Sigmoid colon (tissue), 7 donors: ENCODE measurements at regions of chr11 and their contacts with region 1.

Region 1: DNA sequence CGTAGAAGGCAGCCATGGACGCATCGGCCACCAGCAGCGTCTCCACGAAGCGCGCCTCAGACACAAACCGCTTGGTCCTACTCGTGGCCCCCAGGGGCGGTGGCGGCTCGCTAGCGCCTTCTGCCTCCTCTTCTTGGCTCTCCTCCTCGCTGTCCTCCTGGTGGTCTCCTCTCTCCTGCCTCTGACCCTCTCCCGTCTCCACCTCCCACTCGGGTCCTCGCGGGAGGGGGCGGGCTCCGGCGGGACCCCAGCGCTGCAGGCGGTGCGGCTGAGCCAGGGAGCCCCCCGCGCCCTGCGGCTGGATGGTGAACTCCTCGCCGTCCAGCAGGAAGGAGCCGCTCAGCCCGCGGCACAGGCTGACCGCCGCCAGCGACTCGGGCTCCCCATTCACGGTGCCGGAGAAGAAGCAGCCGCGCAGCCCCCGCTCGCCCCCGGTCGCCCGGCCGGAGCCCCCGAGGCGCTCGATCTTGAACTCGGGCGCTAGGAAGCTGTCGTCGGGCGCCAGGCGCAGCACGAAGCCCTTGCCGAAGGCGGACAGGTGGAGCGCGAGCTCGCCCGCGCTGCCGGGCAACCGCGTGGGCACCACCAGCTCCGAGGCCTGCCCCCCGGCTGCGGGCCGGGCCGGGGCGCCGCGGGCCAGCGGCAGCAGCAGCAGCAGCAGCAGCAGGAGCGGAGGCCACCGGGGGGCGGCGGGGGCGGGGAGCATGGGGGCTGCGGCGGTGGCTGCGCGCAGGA is 661 bp downstream of the ADAMTS8 start:
- DNase-seq: peak; percentile 84
- H3K4me3 ChIP-seq: peak overlapping the region; percentile 43 to 74 (median 60)
- H3K27ac ChIP-seq: peak overlapping the region; percentile 50 to 77 (median 59)
- H3K4me1 ChIP-seq: peaks cover 0 to 38% (median 30%) of the 10 kb centered on the region in 4 donors
- H3K27me3 ChIP-seq: peaks cover 0 to 11% (median 0%) of the 10 kb centered on the region in 3 donors
- CTCF ChIP-seq: peak; percentile 27 to 51 (median 50)
- EP300 ChIP-seq: no peak
- POLR2A ChIP-seq: no peak

Region 2: DNA sequence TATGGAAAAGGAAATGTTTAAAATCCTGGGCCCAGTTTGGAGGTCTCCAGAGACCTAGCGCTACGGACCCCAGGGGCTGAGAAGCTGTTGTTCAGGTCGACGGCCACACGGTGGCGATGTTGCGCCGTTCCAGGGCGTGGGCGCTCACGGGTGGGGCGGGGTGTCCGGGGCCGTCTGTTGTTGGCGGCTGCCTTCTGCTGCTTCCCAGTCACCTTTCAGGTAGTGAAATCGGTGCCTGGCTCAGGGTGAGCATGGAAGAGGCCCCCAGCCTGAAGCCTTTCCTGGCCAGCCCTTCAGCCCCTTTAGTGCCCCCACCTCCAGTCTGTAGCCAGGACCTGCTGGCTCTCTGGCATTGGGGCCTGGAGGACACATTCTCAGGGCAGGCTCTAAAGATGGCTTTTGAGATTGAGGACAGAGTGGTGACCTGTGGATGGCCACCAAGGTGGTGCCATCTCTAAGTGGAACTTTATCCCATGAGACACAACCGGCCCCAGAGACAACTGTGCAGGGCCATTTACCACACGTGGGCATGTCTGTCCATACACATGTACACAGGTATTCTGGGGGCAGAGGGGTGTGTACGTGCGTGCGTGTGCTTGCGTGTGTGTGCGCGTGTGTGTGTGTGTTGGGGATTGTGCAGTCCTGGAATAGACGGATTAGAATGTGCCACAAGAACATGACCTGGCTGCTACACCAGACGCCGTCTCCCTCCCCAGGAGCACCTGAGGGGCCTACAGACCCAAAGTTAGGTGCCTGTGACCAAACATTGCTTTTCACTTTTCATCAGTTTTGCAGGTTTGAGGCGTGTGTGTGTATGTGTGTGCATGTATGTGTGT is 214.4 kb before region 1 on chr11:
- intact Hi-C with region 1: loop called (anchors 2 kb)
- DNase-seq: peak; percentile 77
- H3K4me3 ChIP-seq: no peak overlapping the region
- H3K27ac ChIP-seq: no peak overlapping the region
- H3K4me1 ChIP-seq: peaks cover 0 to 8% (median 0%) of the 10 kb centered on the region in 4 donors
- H3K27me3 ChIP-seq: no peaks in the 10 kb centered on the region
- CTCF ChIP-seq: peak; percentile 89 to 95 (median 90)
- EP300 ChIP-seq: no peak
- POLR2A ChIP-seq: no peak

Region 3: GRCh38 chr11:130314750-130315285 is 112.9 kb before region 1 on chr11 and contains the start of gene ZBTB44:
- intact Hi-C with region 1: loop called (anchors 2 kb)
- DNase-seq: peak; percentile 96
- H3K4me3 ChIP-seq: peak within 1 kb of the TSS; percentile 67 to 92 (median 72)
- H3K27ac ChIP-seq: peak within 1 kb of the TSS; percentile 86 to 96 (median 93)
- H3K4me1 ChIP-seq: peaks cover 0 to 42% (median 35%) of the 10 kb centered on the region in 4 donors
- H3K27me3 ChIP-seq: no peaks in the 10 kb centered on the region
- CTCF ChIP-seq: no peak
- EP300 ChIP-seq: no peak
- POLR2A ChIP-seq: peak; percentile 10 to 25
- total RNA-seq, gene ZBTB44: 73.0 to 162 (median 117) TPM